ENCODE measurements at regions of chr1 and their contacts with region 1.

Region 1: DNA sequence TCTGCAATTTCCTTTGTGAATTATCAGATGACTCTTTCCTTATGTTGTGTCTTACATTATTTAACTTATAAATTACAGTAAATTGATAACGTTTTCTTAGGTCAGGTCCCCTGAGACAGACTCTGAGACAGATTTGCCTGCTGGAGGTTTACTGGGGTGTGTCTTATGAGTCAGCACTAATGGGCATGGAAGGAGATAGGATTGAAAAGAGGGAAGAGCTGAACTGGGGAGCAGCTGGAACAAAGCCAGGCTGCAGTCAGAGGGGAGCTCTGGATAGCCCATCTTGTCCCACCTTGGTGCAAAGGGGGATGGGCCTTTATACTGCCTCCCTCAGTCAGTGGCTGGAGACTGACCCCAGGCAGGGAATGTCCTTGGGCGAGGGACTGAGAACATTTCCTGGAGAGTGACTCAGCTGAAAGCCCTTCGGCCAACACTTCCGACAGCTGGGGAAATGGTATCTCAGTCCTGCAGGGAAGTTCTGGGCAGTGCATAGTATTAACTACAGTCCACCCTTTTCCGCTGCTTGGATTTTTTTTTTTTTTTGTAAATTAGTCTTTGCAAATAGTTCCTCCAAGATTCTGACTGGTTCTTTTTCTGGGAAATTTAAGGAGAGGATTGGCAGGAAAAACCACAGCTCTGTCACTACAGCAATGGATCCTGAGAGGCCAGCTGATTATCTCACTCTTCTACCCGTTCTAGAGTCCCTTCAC is 39.0 kb upstream of the CDC42BPA start:
- DNase-seq: peak; percentile 98
- H3K4me3 ChIP-seq: no peak overlapping the region
- H3K27ac ChIP-seq: no peak overlapping the region
- H3K4me1 ChIP-seq: peaks cover 17% of the 10 kb centered on the region
- H3K27me3 ChIP-seq: peaks cover 76% of the 10 kb centered on the region
- CTCF ChIP-seq: no peak

Region 2: GRCh38 chr1:227429447-227430359 is 72.4 kb after region 1 on chr1:
- CTCF ChIA-PET with region 1: no interaction called
- POLR2A ChIA-PET with region 1: no interaction called
- intact Hi-C with region 1: loop called (anchors 5 kb)
- DNase-seq: peak; percentile 73
- H3K4me3 ChIP-seq: no peak overlapping the region
- H3K27ac ChIP-seq: peak overlapping the region; percentile 13
- H3K4me1 ChIP-seq: peaks cover 40% of the 10 kb centered on the region
- H3K27me3 ChIP-seq: no peaks in the 10 kb centered on the region
- CTCF ChIP-seq: no peak